ENCODE measurements at regions of chr4 and their contacts with region 1.

Region 1: DNA sequence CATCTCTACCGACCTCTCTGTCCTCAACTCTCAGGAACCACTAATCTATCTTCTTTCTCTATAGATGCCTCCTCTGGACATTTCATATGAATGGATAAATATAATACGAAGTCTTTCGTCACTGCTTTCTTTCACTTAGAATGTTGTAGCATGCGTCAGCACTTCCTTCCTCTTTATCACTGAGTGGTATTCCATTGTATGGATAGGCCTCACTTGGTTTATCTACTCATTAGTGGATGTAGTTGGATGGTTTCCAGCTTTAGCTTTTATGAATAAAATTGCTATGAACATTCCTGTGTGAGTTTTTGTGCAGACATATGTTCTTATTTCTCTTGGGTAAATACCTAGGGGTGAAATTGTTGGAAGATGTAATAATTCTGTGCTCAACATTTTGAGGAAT is 528.2 kb upstream of the FAT1 start:
- DNase-seq: no peak
- ATAC-seq: no peak
- H3K4me3 ChIP-seq: no peak overlapping the region
- H3K27ac ChIP-seq: no peak overlapping the region
- H3K4me1 ChIP-seq: no peaks in the 10 kb centered on the region
- H3K27me3 ChIP-seq: no peaks in the 10 kb centered on the region
- CTCF ChIP-seq: no peak

Region 2: DNA sequence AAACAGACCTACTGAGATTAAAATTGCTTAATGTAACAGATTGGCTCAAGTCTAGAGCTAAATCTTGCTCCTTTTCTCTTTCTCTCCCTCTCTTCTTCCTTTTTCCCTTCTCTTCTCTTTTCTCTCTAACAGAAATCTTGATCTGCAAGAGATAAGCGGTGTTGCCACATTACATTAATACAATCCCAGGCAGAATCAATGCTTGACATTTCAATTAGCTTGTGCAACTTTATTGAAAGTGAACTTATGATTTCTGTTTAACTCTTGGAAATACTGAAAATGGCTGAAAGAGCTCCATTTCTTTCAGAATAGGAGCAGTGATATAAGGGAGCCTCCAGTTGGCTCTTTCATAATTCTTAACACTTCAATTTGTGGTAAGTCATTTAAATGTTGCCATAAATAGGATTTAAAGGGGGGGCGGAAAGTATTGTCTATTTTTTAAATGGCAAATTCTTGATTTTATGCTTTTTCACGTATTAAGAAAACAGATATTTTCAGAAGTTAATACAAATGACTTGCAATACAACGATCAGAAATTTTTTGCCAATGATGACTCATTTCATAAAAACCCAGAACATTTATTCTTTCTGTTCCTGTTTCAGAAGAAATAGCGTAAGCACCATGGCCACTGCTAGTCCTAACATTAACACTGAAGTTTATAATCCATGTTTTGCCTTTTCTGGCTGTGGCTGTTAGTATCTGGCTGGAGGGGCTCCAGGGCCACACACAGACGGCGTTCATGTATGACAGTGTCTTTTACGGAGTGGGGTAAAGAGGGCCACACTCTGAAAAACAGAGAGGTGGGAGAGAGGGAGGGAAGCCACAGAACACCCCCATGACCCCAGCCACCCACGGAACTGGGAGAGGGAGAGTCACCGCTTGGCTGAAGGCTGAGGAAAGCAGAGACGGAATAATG is 412.5 kb before region 1 on chr4:
- CTCF ChIA-PET with region 1: no interaction called
- POLR2A ChIA-PET with region 1: interaction called, 12 read pairs
- in situ Hi-C with region 1: no loop called
- intact Hi-C with region 1: no loop called
- DNase-seq: no peak
- ATAC-seq: peak; percentile 33; the same call in 1 of the 2 replicates
- H3K4me3 ChIP-seq: peak overlapping the region; percentile 59 to 90
- H3K27ac ChIP-seq: peak overlapping the region; percentile 91
- H3K4me1 ChIP-seq: peaks cover 19% of the 10 kb centered on the region
- H3K27me3 ChIP-seq: no peaks in the 10 kb centered on the region
- CTCF ChIP-seq: no peak

Measured in Panc1 (cell line).